Prostate gland (tissue), 2 donors: ENCODE measurements at regions of chr2 and their contacts with region 1.

Region 1: DNA sequence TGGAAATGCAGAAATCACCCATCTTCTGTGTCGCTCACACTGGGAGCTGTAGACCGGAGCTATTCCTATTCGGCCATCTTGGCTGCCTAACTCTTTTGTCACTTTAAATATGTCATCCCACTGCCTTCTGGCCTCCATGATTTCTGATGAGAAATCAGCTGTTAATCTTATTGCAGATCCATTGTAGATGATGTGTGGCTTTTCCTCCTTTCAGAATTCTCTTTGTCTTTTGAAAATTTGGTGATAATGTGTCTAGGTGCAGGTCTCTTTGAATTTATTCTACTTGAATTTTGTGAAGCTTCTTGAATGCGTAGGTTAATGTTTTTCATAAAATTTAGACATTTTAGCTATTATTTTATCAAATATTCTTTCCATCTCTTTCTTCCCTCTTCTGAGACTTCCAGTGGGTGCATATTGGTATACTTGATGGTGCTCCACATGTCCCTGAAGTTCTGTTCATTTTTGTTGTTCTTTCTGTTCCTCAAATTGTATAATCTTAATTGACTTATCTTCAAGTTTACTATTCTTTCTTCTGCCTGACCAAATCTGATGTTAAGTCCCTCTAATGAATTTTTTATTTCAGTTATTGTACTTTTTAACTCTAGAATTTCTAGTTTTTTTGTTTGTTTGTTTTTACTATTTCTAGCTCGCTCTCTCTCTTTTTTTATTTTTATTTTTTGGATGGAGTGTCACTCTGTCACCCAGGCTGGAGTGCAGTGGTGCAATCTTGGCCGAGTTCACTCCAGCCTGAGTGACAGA is 90.8 kb upstream of the DLX2 start:
- DNase-seq: no peak
- H3K4me3 ChIP-seq: no peak overlapping the region
- H3K27ac ChIP-seq: no peak overlapping the region
- H3K4me1 ChIP-seq: no peaks in the 10 kb centered on the region
- H3K27me3 ChIP-seq: no peaks in the 10 kb centered on the region
- CTCF ChIP-seq: no peak
- POLR2A ChIP-seq: no peak

Region 2: GRCh38 chr2:171447675-171448074 is 745.8 kb before region 1 on chr2:
- intact Hi-C with region 1: no loop called
- DNase-seq: no peak
- H3K4me3 ChIP-seq: no peak overlapping the region
- H3K27ac ChIP-seq: no peak overlapping the region
- H3K4me1 ChIP-seq: no peaks in the 10 kb centered on the region
- H3K27me3 ChIP-seq: no peaks in the 10 kb centered on the region
- CTCF ChIP-seq: no peak
- POLR2A ChIP-seq: no peak

Region 3: DNA sequence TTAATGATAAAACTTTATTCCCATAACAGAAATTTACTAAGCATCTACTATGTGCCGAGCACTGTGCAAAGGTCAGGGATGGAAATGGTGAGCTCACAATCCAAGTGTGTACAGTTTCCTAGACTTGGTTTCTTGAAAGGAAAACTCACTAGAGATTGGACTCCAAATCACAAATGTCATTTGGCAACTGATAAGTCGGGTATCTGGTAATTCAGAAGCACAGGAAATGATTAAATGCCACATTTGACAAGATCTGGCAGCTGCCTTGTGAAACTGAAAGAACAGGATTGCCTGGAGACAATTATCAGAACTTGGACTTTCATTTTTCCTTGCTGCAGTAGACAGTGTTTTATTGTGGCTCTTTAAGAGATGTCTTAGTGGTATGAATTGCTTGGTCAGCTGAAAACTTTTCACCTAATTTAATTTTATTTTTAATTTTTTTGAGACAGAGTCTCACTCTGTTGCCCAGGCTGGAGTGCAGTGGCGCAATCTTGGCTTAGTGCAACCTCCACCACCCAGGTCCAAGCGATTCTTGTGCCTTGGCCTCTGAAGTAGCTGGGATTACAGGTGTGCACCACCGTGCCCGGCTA is 253.1 kb after region 1 on chr2:
- intact Hi-C with region 1: loop called (anchors 5 kb)
- DNase-seq: no peak
- H3K4me3 ChIP-seq: no peak overlapping the region
- H3K27ac ChIP-seq: peak overlapping the region; percentile 22 to 78
- H3K4me1 ChIP-seq: peaks cover 9% of the 10 kb centered on the region
- H3K27me3 ChIP-seq: no peaks in the 10 kb centered on the region
- CTCF ChIP-seq: no peak
- POLR2A ChIP-seq: no peak

Region 4: DNA sequence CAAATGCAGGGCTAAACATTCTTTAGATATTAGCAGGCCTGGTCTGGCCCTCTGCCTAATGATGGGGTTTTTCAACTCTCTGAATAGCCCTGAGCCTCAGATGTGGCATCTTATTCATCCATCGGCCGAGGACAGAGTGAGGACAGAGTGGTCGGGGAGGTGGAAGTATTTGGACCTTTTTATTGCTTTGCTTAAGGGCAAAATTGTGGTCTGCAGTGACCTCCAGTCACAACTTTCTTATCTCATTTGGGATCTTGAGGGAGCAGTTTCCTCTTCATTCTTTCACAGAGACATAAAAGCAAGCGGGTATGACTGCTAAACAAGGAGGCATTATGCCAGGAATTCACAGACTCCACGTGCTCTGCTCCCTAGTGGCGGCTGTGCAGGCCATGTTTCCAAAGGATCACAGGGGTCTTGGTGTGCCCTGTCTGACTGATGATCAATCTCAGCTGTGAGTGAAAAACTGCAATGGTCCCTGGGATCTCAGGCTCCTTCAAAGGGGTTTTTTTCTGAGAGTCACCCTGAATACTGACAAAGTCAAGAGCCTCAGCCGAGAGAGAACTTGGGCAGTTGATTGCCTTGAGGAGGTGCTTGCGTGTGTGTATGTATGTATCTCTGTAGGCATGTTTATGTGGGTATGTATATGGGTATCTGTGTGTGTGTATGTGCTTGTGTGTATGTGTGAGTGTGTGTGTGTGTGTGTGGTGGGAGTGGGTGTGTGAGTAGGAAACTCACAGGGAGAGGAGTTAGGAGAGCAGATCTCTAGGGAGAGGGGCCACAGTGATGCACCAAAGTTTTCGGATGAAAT is 589.8 kb after region 1 on chr2:
- intact Hi-C with region 1: no loop called
- DNase-seq: peak; percentile 20
- H3K4me3 ChIP-seq: no peak overlapping the region
- H3K27ac ChIP-seq: no peak overlapping the region
- H3K4me1 ChIP-seq: no peaks in the 10 kb centered on the region
- H3K27me3 ChIP-seq: no peaks in the 10 kb centered on the region
- CTCF ChIP-seq: no peak
- POLR2A ChIP-seq: no peak

Region 5: GRCh38 chr2:173109253-173110188 is 916.0 kb after region 1 on chr2:
- intact Hi-C with region 1: no loop called
- DNase-seq: no peak
- H3K4me3 ChIP-seq: no peak overlapping the region
- H3K27ac ChIP-seq: peak overlapping the region in 1 of 2 donors; percentile 3
- H3K4me1 ChIP-seq: no peaks in the 10 kb centered on the region
- H3K27me3 ChIP-seq: no peaks in the 10 kb centered on the region
- CTCF ChIP-seq: no peak
- POLR2A ChIP-seq: no peak